HAP-1 (cell line): ENCODE measurements at regions of chr12 and their contacts with region 1.

Region 1: GRCh38 chr12:30862486-30862885 is 64.1 kb upstream of the TSPAN11 start:
- DNase-seq: no peak
- H3K4me3 ChIP-seq: no peak overlapping the region
- H3K4me1 ChIP-seq: no peaks in the 10 kb centered on the region
- H3K27me3 ChIP-seq: peaks cover 4% of the 10 kb centered on the region; the same call in 1 of the 2 replicates

Region 2: GRCh38 chr12:31220633-31221565 is 358.4 kb after region 1 on chr12:
- in situ Hi-C with region 1: no loop called
- DNase-seq: peak; percentile 28 to 34
- H3K4me3 ChIP-seq: no peak overlapping the region
- H3K4me1 ChIP-seq: peaks cover 19% of the 10 kb centered on the region
- H3K27me3 ChIP-seq: no peaks in the 10 kb centered on the region

Region 3: DNA sequence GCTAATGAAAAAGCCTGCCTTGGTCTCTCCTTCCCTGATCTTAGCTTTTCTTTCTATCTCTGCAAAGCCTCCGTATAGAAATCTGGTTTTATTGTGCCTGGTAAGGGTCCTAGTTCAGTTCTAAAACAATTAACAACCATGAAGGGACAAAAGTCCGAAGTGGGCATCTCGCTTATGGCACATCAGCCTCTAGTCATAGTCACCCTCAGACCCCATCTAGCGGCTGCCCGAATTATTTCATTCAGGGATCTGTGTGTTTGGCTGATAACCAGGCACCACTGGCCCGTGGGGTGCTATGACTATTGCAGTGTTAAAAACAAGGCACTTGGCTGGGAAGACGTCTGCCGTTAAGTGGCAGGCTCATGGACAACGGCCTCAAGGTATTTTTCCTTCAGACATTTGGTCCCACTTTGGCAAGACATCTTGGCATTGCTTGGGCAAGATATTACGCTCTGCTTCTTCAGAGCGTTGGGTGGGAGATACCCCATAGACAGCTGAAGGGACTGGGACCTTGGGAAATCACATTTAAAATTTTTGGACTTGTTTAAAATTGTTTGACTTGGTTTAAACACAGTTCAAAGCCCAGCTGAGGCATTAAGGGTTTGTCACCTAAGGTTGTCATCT is 376.4 kb after region 1 on chr12:
- in situ Hi-C with region 1: loop called (anchors 10 kb)
- DNase-seq: peak; percentile 70 to 88
- H3K4me3 ChIP-seq: no peak overlapping the region
- H3K4me1 ChIP-seq: peaks cover 6% of the 10 kb centered on the region; the same call in 1 of the 2 replicates
- H3K27me3 ChIP-seq: peaks cover 3% of the 10 kb centered on the region; the same call in 1 of the 2 replicates